Cardiac septum (tissue), 1 donor: ENCODE measurements at regions of chr7 and their contacts with region 1.

Region 1: DNA sequence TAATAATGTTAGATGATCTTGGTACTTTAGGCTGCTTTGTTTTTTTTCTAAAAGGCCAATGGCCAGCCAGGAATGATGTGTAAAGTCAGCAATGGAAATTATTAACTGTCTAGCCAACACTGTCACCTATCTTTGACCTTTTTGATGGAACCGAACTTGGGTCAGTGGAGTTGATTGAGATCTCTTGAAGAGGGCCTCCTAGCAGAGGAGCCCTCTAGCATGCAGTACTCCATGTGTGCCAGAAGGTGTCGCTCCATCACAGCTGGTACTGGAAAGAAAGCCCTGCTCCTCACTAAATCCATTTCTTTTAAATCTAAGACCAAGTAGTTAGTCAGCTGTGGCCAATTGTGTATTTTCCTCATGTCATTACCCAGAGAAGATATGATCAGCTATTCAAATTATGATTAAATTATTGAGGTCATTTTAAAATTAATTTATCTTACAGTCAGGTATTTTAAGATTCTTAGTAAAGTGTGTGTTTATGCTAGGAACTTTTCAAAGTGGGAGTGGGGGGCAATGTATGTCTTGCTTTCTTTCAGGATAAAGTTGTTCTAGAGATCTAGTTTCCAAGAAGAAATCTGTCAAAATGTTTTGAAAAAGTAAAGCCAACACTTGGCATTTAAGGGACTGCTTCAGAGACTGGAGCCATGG is 33.1 kb upstream of the CROT start:
- DNase-seq: no peak

Region 2: GRCh38 chr7:87173471-87173870 is 138.9 kb before region 1 on chr7:
- intact Hi-C with region 1: no loop called
- DNase-seq: no peak

Region 3: DNA sequence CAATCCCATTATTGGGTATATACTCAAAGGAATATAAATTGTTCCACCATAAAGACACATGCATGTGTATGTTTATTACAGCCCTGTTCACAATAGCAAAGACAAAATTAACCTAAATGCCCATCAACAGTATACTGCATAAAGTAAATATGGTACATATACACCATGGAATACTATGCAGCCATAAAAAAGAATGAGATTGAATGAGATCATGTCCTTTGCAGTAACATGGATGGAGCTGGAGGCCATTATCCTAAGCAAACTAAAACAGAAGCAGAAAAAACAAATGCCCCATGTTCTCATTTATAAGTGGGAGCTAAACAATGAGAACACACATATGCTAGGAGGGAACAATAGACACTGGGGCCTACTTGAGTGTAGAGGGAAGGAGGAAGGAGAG is 11.6 kb before region 1 on chr7:
- intact Hi-C with region 1: no loop called
- DNase-seq: no peak

Region 4: GRCh38 chr7:87416682-87417587 is 104.6 kb after region 1 on chr7:
- intact Hi-C with region 1: loop called (anchors 2 kb)
- DNase-seq: no peak

Region 5: DNA sequence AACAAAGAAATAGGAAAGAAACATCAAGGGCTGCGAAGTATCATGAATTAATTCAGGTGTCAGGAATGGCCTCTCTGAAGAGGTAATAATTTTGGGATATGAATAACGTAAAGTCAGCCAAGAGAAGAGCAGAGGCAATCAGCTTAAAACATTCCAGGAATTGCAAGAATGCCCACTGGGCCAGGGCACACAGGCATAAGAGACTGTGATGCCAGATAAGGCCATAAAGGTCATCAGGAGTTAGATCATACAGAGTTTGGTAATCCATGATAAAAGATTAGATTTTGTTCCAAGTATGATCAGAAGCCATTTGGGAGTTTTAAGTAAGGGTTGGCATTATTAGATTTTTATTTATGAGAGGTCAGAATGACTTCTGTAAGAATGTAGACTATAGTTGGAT is 216.4 kb after region 1 on chr7:
- intact Hi-C with region 1: no loop called
- DNase-seq: no peak